T-cell (primary cell): ENCODE measurements at regions of chr17 and their contacts with region 1.

Region 1: GRCh38 chr17:71460943-71461342 is 659.9 kb upstream of the SOX9 start:
- DNase-seq: no peak
- ATAC-seq: no peak
- H3K4me3 ChIP-seq: no peak overlapping the region
- H3K4me3 Mint-ChIP-seq: no peak overlapping the region
- H3K27ac ChIP-seq: no peak overlapping the region
- H3K27ac Mint-ChIP-seq: no peak overlapping the region
- H3K4me1 ChIP-seq: no peaks in the 10 kb centered on the region
- H3K4me1 Mint-ChIP-seq: no peaks in the 10 kb centered on the region
- H3K27me3 ChIP-seq: no peaks in the 10 kb centered on the region
- H3K27me3 Mint-ChIP-seq: no peaks in the 10 kb centered on the region

Region 2: GRCh38 chr17:70987867-70988340 is 473.0 kb before region 1 on chr17:
- CTCF ChIA-PET with region 1: no interaction called
- POLR2A ChIA-PET with region 1: no interaction called
- DNase-seq: no peak
- ATAC-seq: no peak
- H3K4me3 ChIP-seq: no peak overlapping the region
- H3K4me3 Mint-ChIP-seq: no peak overlapping the region
- H3K27ac ChIP-seq: no peak overlapping the region
- H3K27ac Mint-ChIP-seq: no peak overlapping the region
- H3K4me1 ChIP-seq: no peaks in the 10 kb centered on the region
- H3K4me1 Mint-ChIP-seq: no peaks in the 10 kb centered on the region
- H3K27me3 ChIP-seq: no peaks in the 10 kb centered on the region
- H3K27me3 Mint-ChIP-seq: no peaks in the 10 kb centered on the region

Region 3: DNA sequence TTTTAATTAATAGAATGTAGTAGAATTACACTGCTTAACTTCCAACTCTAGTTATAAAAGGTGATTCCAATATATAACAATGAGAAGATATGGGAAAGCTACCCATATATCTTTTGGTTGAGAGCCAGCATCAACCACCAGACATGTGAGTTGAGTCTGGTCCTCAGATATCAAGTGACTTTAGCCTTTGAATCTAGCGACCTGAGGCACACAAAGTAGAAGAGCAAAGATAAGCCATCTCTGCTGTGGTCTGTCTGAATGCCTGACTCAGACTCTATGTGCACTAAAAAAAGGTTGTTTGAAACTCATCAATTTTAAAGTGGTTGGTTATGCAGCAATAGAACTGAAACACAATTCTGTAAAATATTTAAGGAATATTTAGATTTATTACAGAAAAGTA is 167.4 kb after region 1 on chr17:
- CTCF ChIA-PET with region 1: no interaction called
- POLR2A ChIA-PET with region 1: interaction called in 1 of 2 experiments, 11 read pairs
- DNase-seq: no peak
- ATAC-seq: no peak
- H3K4me3 ChIP-seq: no peak overlapping the region
- H3K4me3 Mint-ChIP-seq: no peak overlapping the region
- H3K27ac ChIP-seq: no peak overlapping the region
- H3K27ac Mint-ChIP-seq: no peak overlapping the region
- H3K4me1 ChIP-seq: no peaks in the 10 kb centered on the region
- H3K4me1 Mint-ChIP-seq: no peaks in the 10 kb centered on the region
- H3K27me3 ChIP-seq: no peaks in the 10 kb centered on the region
- H3K27me3 Mint-ChIP-seq: no peaks in the 10 kb centered on the region